Activated T-helper 1 cell treated with anti-CD3 and anti-CD28 coated beads, Interleukin-12 subunit alpha, Interleukin-12 subunit beta, Interleukin-2, Interleukin-4 antibody, amounts not matched to agents 30 ng/mL and 10 ng/mL and 1 ng/mL, durations not matched to agents 14 hours and 24 hours and 36 hours (primary cell): ENCODE measurements at regions of chr14 and their contacts with region 1.

Region 1: DNA sequence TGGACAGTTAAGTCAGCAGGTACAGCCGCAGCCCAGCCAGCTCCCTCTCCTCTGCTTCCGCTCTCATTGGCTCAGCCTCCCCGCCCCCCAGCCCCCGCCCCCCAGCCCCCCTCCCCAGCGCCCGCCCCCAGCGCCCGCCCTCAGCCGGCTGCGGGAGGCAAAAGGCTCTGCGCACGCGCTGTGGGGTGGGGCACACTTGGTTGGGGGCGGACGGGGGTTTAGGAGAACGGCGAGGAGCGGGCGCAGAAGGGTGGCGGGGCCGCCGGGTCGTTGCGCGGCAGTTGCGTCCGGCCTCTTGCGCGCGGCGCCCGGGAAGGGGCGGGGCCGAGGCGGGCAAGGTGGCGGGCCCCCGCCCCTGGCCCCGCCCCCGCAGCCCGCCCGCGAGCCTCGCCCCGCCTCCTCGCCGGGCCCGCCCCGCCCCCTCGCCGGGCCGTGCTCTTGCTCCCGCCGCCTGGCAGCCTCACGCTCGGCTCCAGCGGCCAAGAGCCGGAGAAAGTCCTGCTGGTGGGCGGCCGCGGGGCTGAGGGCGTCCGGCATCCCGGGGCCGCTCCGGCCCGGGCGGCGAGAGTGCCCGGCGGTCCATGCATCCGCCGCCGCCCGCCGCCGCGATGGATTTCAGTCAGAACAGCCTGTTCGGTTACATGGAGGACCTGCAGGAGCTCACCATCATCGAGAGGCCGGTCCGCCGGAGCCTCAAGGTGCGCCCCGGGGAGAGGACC is at the start of gene PPP4R4:
- DNase-seq: peak; percentile 85
- H3K4me3 Mint-ChIP-seq: peak within 1 kb of the TSS; percentile 83
- H3K27ac Mint-ChIP-seq: peak within 1 kb of the TSS; percentile 81
- H3K4me1 Mint-ChIP-seq: peaks cover 22% of the 10 kb centered on the region
- H3K27me3 Mint-ChIP-seq: peaks cover 49% of the 10 kb centered on the region
- total RNA-seq, gene PPP4R4: 2.2 and 2.4 TPM in 2 replicates

Region 2: GRCh38 chr14:93332853-93333630 is 841.0 kb before region 1 on chr14 and contains the start of gene BTBD7:
- intact Hi-C with region 1: loop called (anchors 5 kb)
- DNase-seq: peak; percentile 94
- H3K4me3 Mint-ChIP-seq: peak within 1 kb of the TSS; percentile 92
- H3K27ac Mint-ChIP-seq: peak within 1 kb of the TSS; percentile 92
- H3K4me1 Mint-ChIP-seq: peaks cover 49% of the 10 kb centered on the region
- H3K27me3 Mint-ChIP-seq: no peaks in the 10 kb centered on the region
- total RNA-seq, gene BTBD7: 20.6 and 22.8 TPM in 2 replicates